ENCODE measurements at regions of chr12 and their contacts with region 1.

Region 1: GRCh38 chr12:19234171-19234704 is 104.7 kb downstream of the PLEKHA5 start:
- DNase-seq: no peak
- H3K4me3 Mint-ChIP-seq: no peak overlapping the region
- H3K27ac Mint-ChIP-seq: no peak overlapping the region
- H3K4me1 Mint-ChIP-seq: no peaks in the 10 kb centered on the region
- H3K27me3 Mint-ChIP-seq: peaks cover 8% of the 10 kb centered on the region

Region 2: GRCh38 chr12:19181666-19182426 is 52.4 kb before region 1 on chr12:
- intact Hi-C with region 1: no loop called
- DNase-seq: no peak
- H3K4me3 Mint-ChIP-seq: no peak overlapping the region
- H3K27ac Mint-ChIP-seq: no peak overlapping the region
- H3K4me1 Mint-ChIP-seq: no peaks in the 10 kb centered on the region
- H3K27me3 Mint-ChIP-seq: peaks cover 2% of the 10 kb centered on the region

Region 3: GRCh38 chr12:19273482-19274330 is 39.5 kb after region 1 on chr12:
- intact Hi-C with region 1: loop called (anchors 1 kb)
- DNase-seq: no peak
- H3K4me3 Mint-ChIP-seq: no peak overlapping the region
- H3K27ac Mint-ChIP-seq: no peak overlapping the region
- H3K4me1 Mint-ChIP-seq: no peaks in the 10 kb centered on the region
- H3K27me3 Mint-ChIP-seq: no peaks in the 10 kb centered on the region

Region 4: DNA sequence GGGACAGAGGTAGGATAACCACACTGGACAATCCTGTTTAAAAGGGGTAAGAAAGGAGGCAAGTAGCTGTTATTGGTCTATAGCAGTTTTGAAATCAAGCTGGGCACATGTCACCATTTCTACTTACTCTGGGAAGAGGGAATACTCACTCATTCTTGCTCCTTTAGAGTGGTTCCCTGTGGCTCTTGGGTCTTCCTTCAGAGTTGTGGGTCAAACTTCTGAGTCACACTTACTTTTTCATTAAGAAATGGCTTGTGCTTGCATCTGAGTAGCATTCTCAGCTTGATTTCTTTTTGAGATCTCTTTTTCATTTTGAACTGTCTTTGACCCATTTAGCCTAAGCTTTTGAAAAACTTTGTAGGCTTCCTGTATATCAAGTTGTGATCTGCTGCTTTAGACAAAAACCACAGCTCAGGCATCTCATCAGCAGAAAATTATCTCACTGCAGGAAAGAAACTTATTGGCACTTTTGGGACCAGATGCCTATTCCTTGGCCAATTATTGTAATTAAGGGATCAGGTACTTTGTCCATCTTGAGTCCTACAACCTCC is 327.2 kb after region 1 on chr12:
- intact Hi-C with region 1: no loop called
- DNase-seq: no peak
- H3K4me3 Mint-ChIP-seq: no peak overlapping the region
- H3K27ac Mint-ChIP-seq: no peak overlapping the region
- H3K4me1 Mint-ChIP-seq: peaks cover 13% of the 10 kb centered on the region
- H3K27me3 Mint-ChIP-seq: no peaks in the 10 kb centered on the region

Measured in activated T-helper 1 cell treated with anti-CD3 and anti-CD28 coated beads, Interleukin-12 subunit alpha, Interleukin-12 subunit beta, Interleukin-2, Interleukin-4 antibody, amounts not matched to agents 30 ng/mL and 10 ng/mL and 1 ng/mL, durations not matched to agents 14 hours and 24 hours and 36 hours (primary cell).